ENCODE measurements at regions of chr11 and their contacts with region 1.

Region 1: DNA sequence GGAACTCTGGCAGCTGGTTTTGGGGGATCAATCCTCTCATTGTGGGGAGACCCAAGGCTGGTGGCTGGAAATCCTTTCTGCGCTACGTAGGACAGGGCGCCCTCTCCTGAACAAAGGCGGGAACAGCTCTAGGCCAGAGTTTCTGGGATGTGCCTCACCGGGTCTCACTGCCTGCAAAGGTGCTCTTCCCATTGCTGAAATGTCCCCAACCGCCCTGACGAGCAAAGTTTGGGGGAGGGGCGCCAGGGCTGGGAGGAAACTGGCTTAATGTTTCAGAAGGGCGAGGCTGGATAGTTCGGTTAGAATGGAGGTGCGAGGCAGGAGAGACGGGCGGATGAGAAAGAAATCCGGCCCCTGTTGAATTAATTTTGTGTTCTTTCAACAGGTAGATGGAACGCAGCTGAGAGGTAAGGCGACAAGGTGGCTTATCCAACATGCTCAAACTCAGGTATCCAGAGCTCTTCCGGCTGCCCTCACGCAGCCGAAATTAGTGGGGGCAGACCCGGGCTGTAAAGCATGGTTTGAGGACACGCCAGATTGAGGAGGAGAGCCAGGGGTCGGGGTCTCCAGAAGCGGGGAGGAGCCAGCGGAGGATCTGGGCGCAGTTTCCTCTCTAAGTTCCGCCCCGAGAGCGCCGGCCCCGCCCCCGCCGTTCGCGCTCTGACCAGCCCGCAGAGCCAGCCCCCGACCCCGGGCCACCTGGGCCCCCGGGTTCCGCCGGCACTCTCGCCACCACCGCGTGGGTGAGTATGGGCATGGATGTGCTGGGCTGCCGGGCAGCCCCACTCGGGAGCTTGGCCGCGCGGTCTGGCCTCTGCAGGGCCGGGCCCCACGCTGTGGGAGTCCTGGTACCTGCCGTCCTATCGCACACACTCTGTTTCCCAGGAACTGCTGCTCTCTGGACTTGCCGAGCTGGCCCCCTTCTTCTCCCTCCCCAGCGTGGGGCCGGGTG is at the start of gene PGAP2:
- DNase-seq: peak; percentile 69
- ATAC-seq: peak; percentile 87
- H3K4me3 Mint-ChIP-seq: peak within 1 kb of the TSS; percentile 84
- H3K27ac Mint-ChIP-seq: peak within 1 kb of the TSS; percentile 84
- H3K4me1 Mint-ChIP-seq: peaks cover 15% of the 10 kb centered on the region
- H3K27me3 Mint-ChIP-seq: no peaks in the 10 kb centered on the region
- total RNA-seq, gene PGAP2: 22.7 to 23.5 TPM

Region 2: GRCh38 chr11:3683039-3683438 is 125.1 kb before region 1 on chr11:
- CTCF ChIA-PET with region 1: interaction called, 10 read pairs
- DNase-seq: no peak
- ATAC-seq: no peak
- H3K4me3 Mint-ChIP-seq: no peak overlapping the region
- H3K27ac Mint-ChIP-seq: no peak overlapping the region
- H3K4me1 Mint-ChIP-seq: peaks cover 4% of the 10 kb centered on the region
- H3K27me3 Mint-ChIP-seq: no peaks in the 10 kb centered on the region

Region 3: DNA sequence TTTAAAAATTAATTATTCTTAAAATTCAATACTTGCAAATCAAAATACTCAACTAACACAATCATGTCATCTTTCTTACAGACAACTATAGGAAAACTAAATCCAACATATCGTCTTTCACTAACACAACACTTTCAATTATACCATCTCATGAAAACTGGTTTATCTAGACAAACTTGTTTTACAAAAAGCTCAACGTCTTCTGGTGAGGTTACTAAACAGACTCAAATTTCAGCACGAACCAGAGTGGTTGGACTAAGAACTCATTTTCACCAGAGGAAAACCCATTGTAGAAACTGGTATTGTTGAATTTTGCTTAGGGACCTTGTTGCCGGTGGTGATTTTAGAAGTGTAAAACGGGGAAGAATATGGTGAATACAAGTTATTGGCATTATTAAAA is 63.0 kb before region 1 on chr11:
- CTCF ChIA-PET with region 1: interaction called, 11 read pairs
- DNase-seq: no peak
- ATAC-seq: no peak
- H3K4me3 Mint-ChIP-seq: no peak overlapping the region
- H3K27ac Mint-ChIP-seq: no peak overlapping the region
- H3K4me1 Mint-ChIP-seq: peaks cover 2% of the 10 kb centered on the region
- H3K27me3 Mint-ChIP-seq: no peaks in the 10 kb centered on the region

Region 4: DNA sequence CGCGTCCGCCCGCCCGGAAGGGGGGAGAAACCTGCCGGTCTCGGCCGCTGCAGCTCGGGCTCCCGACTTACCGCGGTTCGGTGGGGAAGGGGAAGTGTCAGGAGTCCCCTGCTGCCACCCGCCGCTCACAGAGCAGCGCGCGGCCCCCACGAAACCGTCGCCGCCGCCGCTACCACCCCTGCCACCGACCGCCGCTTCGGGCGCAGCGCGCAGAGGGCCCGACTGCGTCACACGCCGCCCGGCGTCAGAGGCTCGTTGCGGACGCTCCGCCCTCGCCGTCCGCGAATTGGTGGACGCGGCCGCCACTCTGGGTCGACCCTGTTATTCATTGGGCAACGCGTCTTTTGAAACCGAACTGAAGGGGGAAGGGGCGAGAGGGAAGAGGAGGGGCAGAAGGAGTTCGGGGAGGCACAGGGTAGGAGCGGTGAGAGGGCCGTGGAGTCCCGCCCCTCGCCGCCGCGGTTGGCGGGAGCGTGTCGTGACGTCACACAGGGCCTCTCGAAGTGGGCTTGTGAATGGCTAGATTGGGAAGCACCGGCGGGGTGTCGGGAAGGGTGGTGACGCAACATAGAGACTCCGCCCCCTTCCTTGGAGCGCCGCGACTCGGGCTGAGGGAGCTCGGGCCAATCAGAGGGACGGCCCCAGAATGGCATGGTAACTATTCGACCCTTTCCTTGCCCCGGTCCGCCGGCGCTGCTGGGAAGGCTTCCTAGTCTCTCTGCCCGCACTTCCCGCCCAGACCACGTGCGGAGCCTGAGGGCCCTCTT is 10.7 kb before region 1 on chr11 and contains the start of gene NUP98:
- CTCF ChIA-PET with region 1: interaction called, 37 read pairs
- DNase-seq: peak; percentile 100
- ATAC-seq: peak; percentile 97
- H3K4me3 Mint-ChIP-seq: peak within 1 kb of the TSS; percentile 89
- H3K27ac Mint-ChIP-seq: peak within 1 kb of the TSS; percentile 97
- H3K4me1 Mint-ChIP-seq: peaks cover 38% of the 10 kb centered on the region
- H3K27me3 Mint-ChIP-seq: no peaks in the 10 kb centered on the region
- total RNA-seq, gene NUP98: 106 to 108 TPM

Region 5: DNA sequence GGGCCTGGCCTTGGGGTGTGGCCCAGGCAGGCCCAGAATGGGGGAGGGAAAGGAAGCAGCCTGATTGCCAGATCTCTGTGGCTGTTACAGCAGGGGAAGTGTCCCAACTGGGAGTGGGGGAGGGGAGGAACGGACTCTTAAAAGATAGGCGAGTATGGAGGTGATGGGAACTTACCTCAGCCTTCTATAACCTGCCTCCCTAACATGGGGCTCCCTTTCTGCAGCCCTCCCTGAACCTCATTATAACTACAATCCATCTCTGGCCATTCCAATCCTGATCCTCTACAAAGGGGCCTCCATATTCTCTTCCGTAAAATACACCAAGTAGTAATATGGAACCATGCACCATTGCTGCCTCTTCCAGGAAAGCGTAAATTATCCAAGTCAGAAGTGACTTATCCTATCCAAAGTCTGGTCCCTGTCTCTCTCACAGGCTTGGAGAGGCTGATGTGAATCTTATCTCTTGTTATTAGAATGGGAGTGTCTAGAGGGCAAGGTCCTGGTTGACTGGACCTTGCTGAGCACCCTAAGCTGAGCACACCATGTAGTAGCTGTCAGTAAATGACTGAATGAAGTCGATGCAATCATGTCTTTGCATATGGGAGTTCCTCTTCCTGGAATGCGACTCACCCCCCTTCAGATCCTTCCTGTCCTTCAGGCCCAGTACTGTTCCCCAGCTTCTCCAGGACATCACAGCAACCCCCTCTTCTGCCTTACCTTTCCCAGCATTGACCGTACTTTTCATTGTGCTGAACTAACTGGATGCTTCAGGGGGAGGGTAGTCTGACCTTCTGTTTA is 26.7 kb after region 1 on chr11:
- CTCF ChIA-PET with region 1: interaction called, 26 read pairs
- DNase-seq: no peak
- ATAC-seq: no peak
- H3K4me3 Mint-ChIP-seq: peak overlapping the region; percentile 58
- H3K27ac Mint-ChIP-seq: peak overlapping the region; percentile 78
- H3K4me1 Mint-ChIP-seq: peaks cover 86% of the 10 kb centered on the region
- H3K27me3 Mint-ChIP-seq: no peaks in the 10 kb centered on the region

Region 6: GRCh38 chr11:3867209-3868091 is 59.3 kb after region 1 on chr11:
- CTCF ChIA-PET with region 1: no interaction called
- DNase-seq: no peak
- ATAC-seq: no peak
- H3K4me3 Mint-ChIP-seq: no peak overlapping the region
- H3K27ac Mint-ChIP-seq: peak overlapping the region; percentile 1
- H3K4me1 Mint-ChIP-seq: peaks cover 74% of the 10 kb centered on the region
- H3K27me3 Mint-ChIP-seq: no peaks in the 10 kb centered on the region

Region 7: DNA sequence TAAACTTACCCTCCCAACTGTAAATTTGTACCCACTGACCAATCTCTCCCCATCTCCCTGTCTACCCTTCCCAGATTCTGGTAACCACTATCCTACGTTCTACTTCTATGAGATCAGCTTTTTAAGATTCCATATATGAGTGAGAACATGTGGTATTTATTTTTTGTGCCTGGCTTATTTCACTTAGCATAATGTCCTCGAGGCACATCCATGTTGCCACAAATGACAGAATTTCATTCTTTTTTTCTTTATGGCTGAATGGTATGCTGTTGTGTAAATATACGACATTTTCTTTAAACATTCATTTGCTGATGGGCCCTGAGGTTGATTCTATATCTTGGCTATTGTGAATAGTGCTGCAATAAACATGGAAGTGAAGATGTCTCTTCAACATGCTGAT is 211.7 kb after region 1 on chr11:
- CTCF ChIA-PET with region 1: no interaction called
- DNase-seq: no peak
- ATAC-seq: no peak
- H3K4me3 Mint-ChIP-seq: no peak overlapping the region
- H3K27ac Mint-ChIP-seq: no peak overlapping the region
- H3K4me1 Mint-ChIP-seq: peaks cover 8% of the 10 kb centered on the region
- H3K27me3 Mint-ChIP-seq: no peaks in the 10 kb centered on the region